ENCODE measurements at regions of chr16 and their contacts with region 1.

Region 1: GRCh38 chr16:56700195-56700594 is 17.9 kb downstream of the MT1X start:
- DNase-seq: no peak

Region 2: DNA sequence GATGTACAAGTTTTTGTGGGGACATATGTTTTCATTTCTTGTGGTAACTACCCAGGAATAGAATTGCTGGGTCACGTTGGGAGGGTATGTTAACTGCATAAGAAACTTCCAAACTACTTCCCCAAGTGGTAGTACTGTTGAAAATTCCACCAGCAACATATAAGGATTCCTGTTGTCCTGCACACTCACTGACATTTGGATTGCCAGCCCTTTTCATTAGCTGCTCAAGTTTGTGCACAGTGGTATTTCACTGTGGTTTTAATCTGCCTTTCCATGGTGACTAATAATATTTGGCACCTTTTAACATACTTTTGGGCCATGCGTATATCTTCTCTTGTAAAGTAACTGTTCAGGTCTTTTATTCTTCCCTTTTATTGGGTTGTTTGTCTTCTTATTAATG is 405.6 kb before region 1 on chr16:
- intact Hi-C with region 1: no loop called
- DNase-seq: no peak

Region 3: DNA sequence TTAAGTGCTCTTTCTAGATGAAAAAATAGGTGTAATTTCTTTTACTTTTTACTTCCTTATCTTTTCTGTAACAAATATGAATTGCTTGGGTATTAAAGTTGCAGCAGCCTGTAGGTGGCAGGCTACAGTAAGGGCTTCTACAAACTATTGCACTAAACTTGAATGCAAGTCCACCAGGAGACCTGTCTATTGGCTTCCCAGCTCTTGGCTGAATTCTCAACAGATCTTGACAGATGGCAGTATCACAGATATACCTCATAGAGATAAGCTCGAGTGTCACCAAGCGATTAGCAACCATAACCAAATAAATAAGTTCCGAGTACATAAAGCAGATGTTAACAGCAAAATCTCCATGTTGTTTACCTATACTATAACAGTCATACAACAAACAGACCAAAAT is 186.2 kb before region 1 on chr16:
- intact Hi-C with region 1: loop called (anchors 1 kb)
- DNase-seq: no peak

Region 4: GRCh38 chr16:56576585-56577293 is 123.5 kb before region 1 on chr16:
- intact Hi-C with region 1: loop called (anchors 5 kb)
- DNase-seq: peak; percentile 83

Region 5: GRCh38 chr16:56600398-56600999 is 99.7 kb before region 1 on chr16:
- intact Hi-C with region 1: loop called (anchors 1 kb)
- DNase-seq: no peak

Region 6: DNA sequence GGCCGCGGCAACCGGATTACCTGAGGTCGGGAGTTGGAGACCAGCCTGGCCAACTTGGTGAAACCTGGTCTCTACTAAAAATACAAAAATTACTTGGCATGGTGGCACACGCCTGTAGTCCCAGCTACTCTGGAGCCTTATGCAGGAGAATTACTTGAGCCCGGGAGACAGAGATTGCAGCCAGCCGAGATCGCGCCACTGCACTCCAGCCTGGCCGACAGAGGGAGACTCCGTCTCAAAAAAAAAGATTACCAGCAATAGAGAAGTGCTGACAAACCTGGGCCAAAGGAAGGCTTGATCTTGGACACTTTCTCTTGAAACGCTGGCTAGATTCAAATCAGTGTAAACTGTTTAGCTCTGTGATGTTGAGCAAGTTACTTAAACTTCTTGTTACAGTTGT is 26.3 kb before region 1 on chr16:
- intact Hi-C with region 1: loop called (anchors 2 kb)
- DNase-seq: no peak